PC-3 (cell line): ENCODE measurements at regions of chr14 and their contacts with region 1.

Region 1: DNA sequence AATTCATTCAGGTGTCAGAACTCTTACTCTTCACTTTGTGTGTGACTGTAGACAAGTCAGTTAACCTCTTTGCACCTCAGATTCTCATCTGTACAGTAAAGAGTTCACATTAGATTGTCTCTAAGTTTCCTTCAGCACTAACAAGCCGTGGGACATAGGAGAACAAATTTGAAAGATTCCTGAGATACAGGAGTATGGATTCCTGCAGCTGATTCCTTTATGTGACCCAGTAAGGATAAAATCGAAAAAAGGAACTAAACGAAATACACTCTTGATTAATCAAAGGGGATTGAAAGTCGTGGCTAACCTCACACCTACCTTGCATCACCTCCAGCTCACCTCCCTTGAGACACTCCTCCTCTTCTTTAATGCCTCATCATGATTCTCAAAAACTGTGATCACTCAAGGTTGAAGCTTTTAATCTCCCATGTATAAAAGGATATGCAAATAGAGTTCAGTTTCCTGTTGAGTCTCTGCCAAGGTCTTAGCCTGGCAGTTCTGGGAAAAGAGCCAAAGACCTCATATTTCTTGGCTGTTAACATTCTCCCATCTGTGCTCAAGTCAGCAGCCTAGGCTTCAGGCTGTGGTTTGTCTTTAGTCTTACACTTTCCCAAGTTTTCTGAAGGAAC is 156.6 kb downstream of the DAD1 start:
- DNase-seq: peak; percentile 97
- ATAC-seq: peak; percentile 93
- H3K4me3 ChIP-seq: no peak overlapping the region
- H3K27ac ChIP-seq: no peak overlapping the region
- H3K4me1 ChIP-seq: peaks cover 15% of the 10 kb centered on the region
- H3K27me3 ChIP-seq: no peaks in the 10 kb centered on the region
- CTCF ChIP-seq: no peak

Region 2: DNA sequence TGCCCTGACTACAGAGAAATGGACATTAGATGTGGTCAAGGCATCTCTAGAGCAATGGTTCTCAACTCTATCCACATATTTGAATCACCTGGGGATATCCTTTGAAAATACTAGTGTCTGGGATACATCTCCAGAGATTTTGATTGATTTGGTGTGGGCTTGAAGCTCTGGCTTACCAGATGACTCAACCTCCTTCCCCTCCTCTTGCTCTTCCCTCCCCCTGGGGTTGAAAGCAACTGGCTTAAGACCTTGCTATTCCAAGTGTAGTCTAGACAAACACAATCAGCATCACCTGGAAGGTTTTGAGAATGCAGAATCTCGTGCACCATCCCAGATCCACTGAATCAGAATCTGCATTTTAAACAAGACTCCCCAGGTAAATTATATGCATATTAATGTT is 27.3 kb before region 1 on chr14:
- CTCF ChIA-PET with region 1: no interaction called
- POLR2A ChIA-PET with region 1: no interaction called
- intact Hi-C with region 1: loop called (anchors 2 kb)
- DNase-seq: no peak
- ATAC-seq: no peak
- H3K4me3 ChIP-seq: no peak overlapping the region
- H3K27ac ChIP-seq: no peak overlapping the region
- H3K4me1 ChIP-seq: peaks cover 9% of the 10 kb centered on the region; the same call in 1 of the 2 replicates
- H3K27me3 ChIP-seq: no peaks in the 10 kb centered on the region
- CTCF ChIP-seq: no peak

Region 3: GRCh38 chr14:22448905-22449599 is 16.6 kb after region 1 on chr14:
- CTCF ChIA-PET with region 1: no interaction called
- POLR2A ChIA-PET with region 1: no interaction called
- intact Hi-C with region 1: no loop called
- DNase-seq: peak; percentile 50
- ATAC-seq: peak; percentile 71
- H3K4me3 ChIP-seq: no peak overlapping the region
- H3K27ac ChIP-seq: peak overlapping the region; percentile 47
- H3K4me1 ChIP-seq: peaks cover 17% of the 10 kb centered on the region
- H3K27me3 ChIP-seq: no peaks in the 10 kb centered on the region
- CTCF ChIP-seq: no peak